ENCODE measurements at regions of chr11 and their contacts with region 1.

Region 1: GRCh38 chr11:65382033-65382807 is at the start of gene SLC25A45:
- DNase-seq: peak; percentile 95 to 96
- ATAC-seq: peak; percentile 80 to 86
- H3K4me3 ChIP-seq: peak within 1 kb of the TSS; percentile 46 to 63 (median 54)
- H3K27ac ChIP-seq: peak within 1 kb of the TSS; percentile 96 to 100 (median 98)
- H3K4me1 ChIP-seq: peaks cover 46 to 51% of the 10 kb centered on the region in 2 donors
- H3K27me3 ChIP-seq: no peaks in the 10 kb centered on the region
- CTCF ChIP-seq: peak; percentile 93 to 99 (median 96)
- POLR2A ChIP-seq: peak; percentile 62 to 89
- total RNA-seq, gene SLC25A45: 2.6 to 12.4 (median 5.6) TPM

Region 2: GRCh38 chr11:65506770-65507505 is 124.7 kb after region 1 on chr11:
- in situ Hi-C with region 1: no loop called
- intact Hi-C with region 1: loop called (anchors 1 kb)
- DNase-seq: peak in 1 of 2 donors; percentile 63
- ATAC-seq: peak; percentile 3 to 12
- H3K4me3 ChIP-seq: peak overlapping the region; percentile 18 to 93 (median 55)
- H3K27ac ChIP-seq: peak overlapping the region; percentile 91 to 99 (median 94)
- H3K4me1 ChIP-seq: peaks cover 38 to 46% of the 10 kb centered on the region in 2 donors
- H3K27me3 ChIP-seq: no peaks in the 10 kb centered on the region
- CTCF ChIP-seq: no peak
- POLR2A ChIP-seq: peak; percentile 24 to 56

Measured in gastrocnemius medialis (tissue), 4 donors.